ENCODE measurements at regions of chr21 and their contacts with region 1.

Region 1: GRCh38 chr21:41678944-41679343 is 87.9 kb downstream of the RIPK4 start:
- DNase-seq: peak; percentile 99
- H3K4me3 ChIP-seq: peak overlapping the region in 1 of 3 experiments; percentile 60
- H3K4me3 Mint-ChIP-seq: peak overlapping the region in 1 of 2 donors; percentile 74
- H3K27ac ChIP-seq: peak overlapping the region; percentile 62 to 93
- H3K27ac Mint-ChIP-seq: peak overlapping the region; percentile 87 to 93 (median 91)
- H3K4me1 ChIP-seq: peaks cover 22 to 28% of the 10 kb centered on the region in 2 donors
- H3K4me1 Mint-ChIP-seq: peaks cover 34% of the 10 kb centered on the region
- H3K27me3 ChIP-seq: no peaks in the 10 kb centered on the region
- H3K27me3 Mint-ChIP-seq: peaks cover 3 to 10% (median 7%) of the 10 kb centered on the region in 3 donors
- CTCF ChIP-seq: no peak

Region 2: GRCh38 chr21:41726945-41727783 is 48.2 kb after region 1 on chr21:
- intact Hi-C with region 1: no loop called
- DNase-seq: no peak
- H3K4me3 ChIP-seq: peak overlapping the region in 1 of 3 experiments; percentile 73
- H3K4me3 Mint-ChIP-seq: peak overlapping the region in 1 of 2 donors; percentile 89
- H3K27ac ChIP-seq: peak overlapping the region in 1 of 2 donors; percentile 81
- H3K27ac Mint-ChIP-seq: peak overlapping the region in 1 of 7 donors; percentile 4
- H3K4me1 ChIP-seq: peaks cover 35 to 48% of the 10 kb centered on the region in 2 donors
- H3K4me1 Mint-ChIP-seq: peaks cover 44% of the 10 kb centered on the region
- H3K27me3 ChIP-seq: peaks cover 0 to 18% of the 10 kb centered on the region in 2 donors
- H3K27me3 Mint-ChIP-seq: peaks cover 34 to 66% (median 53%) of the 10 kb centered on the region in 3 donors
- CTCF ChIP-seq: no peak

Region 3: GRCh38 chr21:41761211-41762181 is 82.6 kb after region 1 on chr21:
- intact Hi-C with region 1: loop called (anchors 5 to 10 kb)
- DNase-seq: peak; percentile 91 to 92 (median 92)
- H3K4me3 ChIP-seq: peak overlapping the region; percentile 11 to 73 (median 21)
- H3K4me3 Mint-ChIP-seq: peak overlapping the region; percentile 75 to 88
- H3K27ac ChIP-seq: peak overlapping the region; percentile 88 to 95
- H3K27ac Mint-ChIP-seq: peak overlapping the region; percentile 94 to 99 (median 99)
- H3K4me1 ChIP-seq: peaks cover 47 to 54% of the 10 kb centered on the region in 2 donors
- H3K4me1 Mint-ChIP-seq: peaks cover 48% of the 10 kb centered on the region
- H3K27me3 ChIP-seq: peaks cover 14 to 34% of the 10 kb centered on the region in 2 donors
- H3K27me3 Mint-ChIP-seq: peaks cover 27 to 42% (median 38%) of the 10 kb centered on the region in 3 donors
- CTCF ChIP-seq: no peak